ENCODE measurements at regions of chr1 and their contacts with region 1.

Region 1: GRCh38 chr1:183891158-183891856 is 86.4 kb downstream of the RGL1 start:
- DNase-seq: no peak
- H3K4me3 ChIP-seq: no peak overlapping the region
- H3K4me3 Mint-ChIP-seq: no peak overlapping the region
- H3K27ac ChIP-seq: no peak overlapping the region
- H3K27ac Mint-ChIP-seq: no peak overlapping the region
- H3K4me1 ChIP-seq: peaks cover 34% of the 10 kb centered on the region
- H3K4me1 Mint-ChIP-seq: peaks cover 34 to 42% (median 38%) of the 10 kb centered on the region in 4 donors
- H3K27me3 ChIP-seq: no peaks in the 10 kb centered on the region
- H3K27me3 Mint-ChIP-seq: no peaks in the 10 kb centered on the region

Region 2: DNA sequence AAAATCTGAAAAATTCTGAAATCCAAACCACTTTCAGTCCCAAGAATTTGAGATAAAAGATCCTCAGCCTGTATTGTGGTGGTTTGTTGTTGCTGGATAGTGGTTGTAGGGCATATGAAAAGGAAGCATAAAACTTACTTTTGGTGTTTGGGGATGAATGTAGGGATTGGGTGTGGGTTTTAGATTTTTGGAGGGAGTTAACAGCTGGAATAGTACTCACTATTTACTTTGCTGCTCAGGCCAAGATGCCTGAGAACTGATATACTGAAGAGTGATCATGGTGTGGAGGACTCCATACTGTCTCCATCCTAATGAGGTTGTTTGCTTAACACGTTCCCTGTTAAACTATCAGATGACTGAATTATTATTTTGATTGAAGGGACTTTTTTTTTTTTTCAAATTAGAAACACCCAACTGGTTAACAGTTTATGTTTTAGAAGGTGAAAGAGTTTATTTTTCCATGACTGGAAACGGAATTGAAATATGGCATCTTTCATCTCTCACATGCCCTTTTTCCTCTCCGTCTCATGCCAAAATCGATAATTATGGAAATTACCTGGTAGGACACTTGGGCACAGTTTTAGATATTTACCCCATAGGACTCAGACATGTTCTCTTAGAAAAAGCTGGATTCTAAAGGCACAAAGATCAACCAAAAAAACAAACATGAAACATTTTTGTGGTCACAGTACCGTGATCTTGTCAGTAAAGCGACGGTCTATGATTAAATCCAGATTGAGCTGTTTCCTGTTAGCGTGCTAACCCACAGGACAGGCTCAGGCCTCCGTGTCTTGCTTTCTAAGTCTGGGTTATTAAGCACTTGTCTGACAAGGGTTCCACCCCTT is 49.1 kb before region 1 on chr1:
- CTCF ChIA-PET with region 1: no interaction called
- POLR2A ChIA-PET with region 1: interaction called, 4 read pairs
- intact Hi-C with region 1: loop called (anchors 1 kb)
- DNase-seq: peak in 4 of 5 donors; percentile 3 to 25 (median 9)
- H3K4me3 ChIP-seq: no peak overlapping the region
- H3K4me3 Mint-ChIP-seq: peak overlapping the region in 7 of 8 donors; percentile 45 to 78 (median 63)
- H3K27ac ChIP-seq: no peak overlapping the region
- H3K27ac Mint-ChIP-seq: peak overlapping the region in 4 of 7 donors; percentile 2 to 74 (median 42)
- H3K4me1 ChIP-seq: peaks cover 6% of the 10 kb centered on the region
- H3K4me1 Mint-ChIP-seq: peaks cover 11 to 18% (median 15%) of the 10 kb centered on the region in 4 donors
- H3K27me3 ChIP-seq: no peaks in the 10 kb centered on the region
- H3K27me3 Mint-ChIP-seq: no peaks in the 10 kb centered on the region

Region 3: GRCh38 chr1:183873642-183874041 is 17.7 kb before region 1 on chr1:
- CTCF ChIA-PET with region 1: no interaction called
- POLR2A ChIA-PET with region 1: interaction called, 4 read pairs
- intact Hi-C with region 1: loop called (anchors 1 kb)
- DNase-seq: peak in 4 of 5 donors; percentile 8 to 19 (median 14)
- H3K4me3 ChIP-seq: no peak overlapping the region
- H3K4me3 Mint-ChIP-seq: no peak overlapping the region
- H3K27ac ChIP-seq: no peak overlapping the region
- H3K27ac Mint-ChIP-seq: peak overlapping the region in 5 of 7 donors; percentile 47 to 72 (median 62)
- H3K4me1 ChIP-seq: peaks cover 11% of the 10 kb centered on the region
- H3K4me1 Mint-ChIP-seq: peaks cover 4 to 15% (median 14%) of the 10 kb centered on the region in 4 donors
- H3K27me3 ChIP-seq: no peaks in the 10 kb centered on the region
- H3K27me3 Mint-ChIP-seq: no peaks in the 10 kb centered on the region